Natural killer cell (primary cell): ENCODE measurements at regions of chr20 and their contacts with region 1.

Region 1: DNA sequence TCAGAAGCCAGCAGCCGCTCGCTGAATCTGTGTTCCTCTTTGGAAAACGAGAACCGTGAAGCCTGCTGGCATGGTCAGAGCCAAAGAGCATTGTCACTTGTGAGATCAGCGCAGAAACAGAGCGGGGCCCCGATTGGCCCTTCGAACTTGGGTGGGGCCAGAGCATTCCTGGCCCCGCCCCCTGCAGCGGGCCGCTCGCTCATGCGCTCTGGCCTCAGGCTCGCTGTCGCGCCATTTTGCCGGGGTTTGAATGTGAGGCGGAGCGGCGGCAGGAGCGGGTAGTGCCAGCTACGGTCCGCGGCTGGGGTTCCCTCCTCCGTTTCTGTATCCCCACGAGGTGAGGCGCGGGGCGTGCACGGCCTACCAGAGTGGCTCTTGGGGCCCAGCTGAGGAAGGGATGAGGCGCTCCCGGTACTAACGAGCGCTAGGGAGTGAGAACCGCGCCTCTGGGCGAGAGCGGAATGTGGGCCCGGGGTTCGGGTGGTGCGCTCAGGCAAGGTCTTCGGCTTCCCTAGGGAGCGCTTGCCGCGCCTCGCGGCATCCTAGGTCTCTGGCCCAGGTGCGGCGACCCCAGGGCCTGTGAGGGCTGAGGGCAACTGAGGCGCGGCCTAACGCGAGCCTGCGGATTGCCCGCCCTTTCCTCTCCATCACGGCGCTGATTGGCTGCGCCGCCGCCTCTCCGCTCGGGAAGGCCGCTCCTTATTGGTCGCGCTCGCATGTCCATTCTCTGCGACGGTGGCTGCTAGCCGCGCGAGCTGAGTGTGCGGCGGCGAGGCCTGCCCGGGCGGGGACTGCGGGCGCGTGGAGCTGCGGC is at the start of gene CSE1L:
- DNase-seq: peak; percentile 94 to 97
- ATAC-seq: peak; percentile 85 to 95 (median 90)
- H3K4me3 ChIP-seq: peak within 1 kb of the TSS; percentile 100
- H3K4me3 Mint-ChIP-seq: peak within 1 kb of the TSS; percentile 99
- H3K27ac ChIP-seq: peak within 1 kb of the TSS; percentile 96
- H3K27ac Mint-ChIP-seq: peak within 1 kb of the TSS; percentile 97 to 99
- H3K4me1 ChIP-seq: peaks cover 19% of the 10 kb centered on the region
- H3K4me1 Mint-ChIP-seq: peaks cover 29 to 37% of the 10 kb centered on the region in 2 donors
- H3K27me3 ChIP-seq: no peaks in the 10 kb centered on the region
- H3K27me3 Mint-ChIP-seq: no peaks in the 10 kb centered on the region
- CTCF ChIP-seq: no peak
- total RNA-seq, gene CSE1L: 24.6 to 29.5 (median 25.8) TPM

Region 2: DNA sequence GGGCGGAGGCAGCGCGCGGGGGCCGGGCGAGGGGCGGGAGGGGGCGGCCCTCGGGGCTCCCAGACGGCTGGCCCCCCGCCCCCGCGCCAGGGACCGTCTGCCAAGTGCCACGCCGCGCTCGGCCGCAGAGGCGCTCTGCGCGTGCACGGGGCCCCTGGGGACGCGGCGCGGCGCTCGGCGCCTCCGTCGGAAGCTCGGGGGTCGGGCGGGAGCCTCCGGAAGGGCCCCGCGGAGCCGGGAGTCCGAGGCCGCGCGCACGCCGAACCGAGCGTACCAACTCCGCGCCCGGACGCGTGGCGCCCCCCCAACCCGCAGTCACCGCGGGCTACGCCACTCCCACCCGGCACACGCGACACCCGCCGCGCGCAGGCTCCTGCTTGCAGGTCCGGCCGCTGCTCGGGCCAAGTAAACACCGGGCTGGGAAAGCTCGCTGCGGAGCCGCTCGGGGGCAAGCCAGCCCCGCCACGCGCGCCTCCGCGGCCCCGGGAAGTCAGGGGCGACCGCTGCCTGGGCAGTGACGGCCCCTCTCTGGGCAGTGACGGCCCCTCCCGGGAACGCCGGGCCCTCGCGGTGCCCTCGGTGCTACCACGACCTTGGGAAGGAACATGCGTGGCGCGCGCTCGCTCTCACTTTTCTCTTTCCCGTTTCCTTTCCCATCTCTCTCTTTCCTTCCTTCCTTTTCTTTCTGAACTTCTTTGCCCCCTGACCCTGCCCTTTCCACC is 218.1 kb before region 1 on chr20:
- intact Hi-C with region 1: loop called (anchors 5 kb)
- DNase-seq: peak; percentile 89 to 91
- ATAC-seq: peak; percentile 66 to 89 (median 77)
- H3K4me3 ChIP-seq: peak overlapping the region; percentile 23
- H3K4me3 Mint-ChIP-seq: peak overlapping the region; percentile 91
- H3K27ac ChIP-seq: peak overlapping the region; percentile 43
- H3K27ac Mint-ChIP-seq: peak overlapping the region; percentile 81 to 86
- H3K4me1 ChIP-seq: peaks cover 46% of the 10 kb centered on the region
- H3K4me1 Mint-ChIP-seq: peaks cover 32 to 47% of the 10 kb centered on the region in 2 donors
- H3K27me3 ChIP-seq: no peaks in the 10 kb centered on the region
- H3K27me3 Mint-ChIP-seq: no peaks in the 10 kb centered on the region
- CTCF ChIP-seq: no peak

Region 3: DNA sequence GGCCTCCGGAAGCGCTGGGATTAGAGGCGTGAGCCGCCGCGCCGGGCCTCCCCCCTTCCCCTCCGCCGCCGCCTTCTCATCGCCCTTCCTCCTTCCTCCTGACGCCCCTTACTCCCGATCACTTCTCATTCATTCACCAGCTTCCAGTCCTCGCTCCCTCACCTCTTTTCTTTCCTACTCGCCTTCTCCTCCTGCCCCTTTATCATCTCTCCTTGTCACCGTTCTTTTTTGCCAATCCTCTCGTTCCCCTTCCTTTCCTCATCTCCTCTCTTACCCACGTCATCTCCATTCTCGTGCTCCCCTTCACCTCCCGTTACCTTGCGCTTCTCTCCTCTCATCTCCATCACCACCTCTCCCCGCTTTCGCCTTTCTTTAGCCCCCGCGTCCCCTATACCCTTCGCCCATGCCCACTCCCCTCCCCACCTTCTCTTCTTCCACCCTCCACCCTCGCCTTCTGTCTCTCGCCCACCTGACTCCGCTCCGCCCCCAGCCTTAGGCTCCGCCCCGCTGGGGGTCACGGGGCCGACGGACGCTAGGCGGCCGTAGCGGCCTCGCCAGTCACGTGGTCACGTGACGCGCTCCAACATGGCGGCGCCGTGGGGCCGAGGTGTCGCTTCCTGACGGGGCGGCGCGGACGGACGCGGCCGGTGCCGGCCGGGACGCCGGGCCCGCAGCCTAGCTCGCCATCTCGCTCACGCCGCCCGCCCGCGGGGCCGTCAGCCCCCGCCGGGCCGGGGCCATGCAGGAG is 125.0 kb before region 1 on chr20 and contains the start of gene ARFGEF2:
- intact Hi-C with region 1: loop called (anchors 1 kb)
- DNase-seq: peak; percentile 95 to 96
- ATAC-seq: peak; percentile 94 to 98 (median 96)
- H3K4me3 ChIP-seq: peak within 1 kb of the TSS; percentile 68
- H3K4me3 Mint-ChIP-seq: peak within 1 kb of the TSS; percentile 96
- H3K27ac ChIP-seq: peak within 1 kb of the TSS; percentile 85
- H3K27ac Mint-ChIP-seq: peak within 1 kb of the TSS; percentile 92 to 96
- H3K4me1 ChIP-seq: peaks cover 20% of the 10 kb centered on the region
- H3K4me1 Mint-ChIP-seq: peaks cover 38 to 50% of the 10 kb centered on the region in 2 donors
- H3K27me3 ChIP-seq: no peaks in the 10 kb centered on the region
- H3K27me3 Mint-ChIP-seq: no peaks in the 10 kb centered on the region
- CTCF ChIP-seq: no peak
- total RNA-seq, gene ARFGEF2: 22.7 to 26.9 (median 26.9) TPM

Region 4: DNA sequence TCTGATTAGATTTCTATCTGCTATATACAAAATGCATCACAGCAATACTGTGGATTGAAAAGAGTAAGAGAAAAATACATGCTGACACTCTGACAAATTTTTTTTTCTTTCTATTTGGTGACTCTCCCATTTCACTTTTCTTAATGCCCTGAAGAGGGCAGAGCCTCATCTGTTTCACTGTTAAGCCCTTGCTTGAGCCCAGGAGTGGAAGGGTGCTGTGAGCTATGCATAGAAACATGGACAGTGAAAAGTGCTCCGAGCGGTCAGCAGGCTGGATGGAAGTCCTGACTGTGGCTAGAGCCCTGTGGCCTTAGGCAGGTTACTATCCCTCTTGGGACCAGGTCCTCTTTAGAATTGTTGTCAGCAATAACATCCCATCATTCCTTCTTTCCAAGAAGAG is 17.6 kb before region 1 on chr20:
- intact Hi-C with region 1: no loop called
- DNase-seq: peak in 1 of 2 donors; percentile 11
- ATAC-seq: no peak
- H3K4me3 ChIP-seq: no peak overlapping the region
- H3K4me3 Mint-ChIP-seq: no peak overlapping the region
- H3K27ac ChIP-seq: no peak overlapping the region
- H3K27ac Mint-ChIP-seq: no peak overlapping the region
- H3K4me1 ChIP-seq: peaks cover 5% of the 10 kb centered on the region
- H3K4me1 Mint-ChIP-seq: peaks cover 0 to 4% of the 10 kb centered on the region in 2 donors
- H3K27me3 ChIP-seq: no peaks in the 10 kb centered on the region
- H3K27me3 Mint-ChIP-seq: no peaks in the 10 kb centered on the region
- CTCF ChIP-seq: no peak

Region 5: DNA sequence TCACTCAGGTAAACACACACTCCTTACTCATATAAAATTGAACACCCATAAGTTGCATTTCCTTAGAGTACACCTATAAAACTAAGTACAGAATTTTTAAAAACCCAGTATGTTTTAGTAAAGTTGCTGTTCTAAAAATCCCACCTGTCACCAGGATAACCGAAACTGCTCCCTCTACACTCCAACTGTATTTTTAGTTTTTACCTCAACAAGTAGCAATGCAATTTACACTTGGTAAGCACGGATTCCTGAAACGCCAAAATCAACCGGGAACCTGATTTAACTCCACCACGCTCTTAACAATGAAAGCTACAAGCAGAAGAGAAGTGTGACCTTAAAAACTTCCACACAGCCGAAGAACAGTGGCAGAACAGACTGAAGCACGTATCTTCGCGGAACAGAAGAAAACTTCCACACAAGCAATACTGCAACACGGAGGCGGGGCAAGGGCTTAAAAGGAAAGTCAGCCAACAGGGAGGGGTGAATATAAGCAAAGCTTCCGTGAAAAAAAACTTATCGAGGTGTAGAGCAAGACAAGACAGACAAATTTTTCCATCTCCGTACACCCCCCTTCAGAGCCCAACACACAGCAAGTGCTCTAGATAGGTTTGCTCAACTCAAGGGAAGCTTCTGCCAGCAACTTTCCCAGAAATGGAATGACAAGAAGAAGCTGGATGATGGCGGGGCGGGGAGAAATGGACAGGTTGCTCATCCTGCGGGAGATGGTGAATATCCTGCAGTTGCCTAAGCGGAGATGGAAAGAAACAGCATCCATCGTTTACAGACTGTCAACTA is 140.4 kb after region 1 on chr20:
- intact Hi-C with region 1: loop called (anchors 5 kb)
- DNase-seq: peak; percentile 37 to 83
- ATAC-seq: peak in 2 of 3 donors; percentile 11 to 22
- H3K4me3 ChIP-seq: peak overlapping the region; percentile 42
- H3K4me3 Mint-ChIP-seq: peak overlapping the region; percentile 92
- H3K27ac ChIP-seq: peak overlapping the region; percentile 82
- H3K27ac Mint-ChIP-seq: peak overlapping the region; percentile 86
- H3K4me1 ChIP-seq: peaks cover 16% of the 10 kb centered on the region
- H3K4me1 Mint-ChIP-seq: peaks cover 48 to 53% of the 10 kb centered on the region in 2 donors
- H3K27me3 ChIP-seq: no peaks in the 10 kb centered on the region
- H3K27me3 Mint-ChIP-seq: peaks cover 0 to 3% of the 10 kb centered on the region in 2 donors
- CTCF ChIP-seq: no peak

Region 6: GRCh38 chr20:49219089-49219923 is 173.0 kb after region 1 on chr20 and contains the start of gene DDX27:
- intact Hi-C with region 1: loop called (anchors 1 kb)
- DNase-seq: peak; percentile 97 to 100
- ATAC-seq: peak; percentile 88 to 93 (median 92)
- H3K4me3 ChIP-seq: peak within 1 kb of the TSS; percentile 91
- H3K4me3 Mint-ChIP-seq: peak within 1 kb of the TSS; percentile 96
- H3K27ac ChIP-seq: peak within 1 kb of the TSS; percentile 96
- H3K27ac Mint-ChIP-seq: peak within 1 kb of the TSS; percentile 94 to 96
- H3K4me1 ChIP-seq: peaks cover 23% of the 10 kb centered on the region
- H3K4me1 Mint-ChIP-seq: peaks cover 27 to 32% of the 10 kb centered on the region in 2 donors
- H3K27me3 ChIP-seq: no peaks in the 10 kb centered on the region
- H3K27me3 Mint-ChIP-seq: no peaks in the 10 kb centered on the region
- CTCF ChIP-seq: no peak
- total RNA-seq, gene DDX27: 71.5 to 91.3 (median 75.9) TPM

Region 7: GRCh38 chr20:49278036-49278817 is 231.9 kb after region 1 on chr20 and contains the start of gene ZNFX1:
- intact Hi-C with region 1: loop called (anchors 2 kb)
- DNase-seq: peak; percentile 97 to 99
- ATAC-seq: peak; percentile 83 to 95 (median 86)
- H3K4me3 ChIP-seq: peak within 1 kb of the TSS; percentile 76
- H3K4me3 Mint-ChIP-seq: peak within 1 kb of the TSS; percentile 97
- H3K27ac ChIP-seq: peak within 1 kb of the TSS; percentile 90
- H3K27ac Mint-ChIP-seq: peak within 1 kb of the TSS; percentile 94 to 95
- H3K4me1 ChIP-seq: peaks cover 58% of the 10 kb centered on the region
- H3K4me1 Mint-ChIP-seq: peaks cover 69 to 81% of the 10 kb centered on the region in 2 donors
- H3K27me3 ChIP-seq: no peaks in the 10 kb centered on the region
- H3K27me3 Mint-ChIP-seq: no peaks in the 10 kb centered on the region
- CTCF ChIP-seq: no peak
- total RNA-seq, gene ZNFX1: 55.8 to 58.5 (median 57.8) TPM